ENCODE measurements at regions of chr20 and their contacts with region 1.

Region 1: DNA sequence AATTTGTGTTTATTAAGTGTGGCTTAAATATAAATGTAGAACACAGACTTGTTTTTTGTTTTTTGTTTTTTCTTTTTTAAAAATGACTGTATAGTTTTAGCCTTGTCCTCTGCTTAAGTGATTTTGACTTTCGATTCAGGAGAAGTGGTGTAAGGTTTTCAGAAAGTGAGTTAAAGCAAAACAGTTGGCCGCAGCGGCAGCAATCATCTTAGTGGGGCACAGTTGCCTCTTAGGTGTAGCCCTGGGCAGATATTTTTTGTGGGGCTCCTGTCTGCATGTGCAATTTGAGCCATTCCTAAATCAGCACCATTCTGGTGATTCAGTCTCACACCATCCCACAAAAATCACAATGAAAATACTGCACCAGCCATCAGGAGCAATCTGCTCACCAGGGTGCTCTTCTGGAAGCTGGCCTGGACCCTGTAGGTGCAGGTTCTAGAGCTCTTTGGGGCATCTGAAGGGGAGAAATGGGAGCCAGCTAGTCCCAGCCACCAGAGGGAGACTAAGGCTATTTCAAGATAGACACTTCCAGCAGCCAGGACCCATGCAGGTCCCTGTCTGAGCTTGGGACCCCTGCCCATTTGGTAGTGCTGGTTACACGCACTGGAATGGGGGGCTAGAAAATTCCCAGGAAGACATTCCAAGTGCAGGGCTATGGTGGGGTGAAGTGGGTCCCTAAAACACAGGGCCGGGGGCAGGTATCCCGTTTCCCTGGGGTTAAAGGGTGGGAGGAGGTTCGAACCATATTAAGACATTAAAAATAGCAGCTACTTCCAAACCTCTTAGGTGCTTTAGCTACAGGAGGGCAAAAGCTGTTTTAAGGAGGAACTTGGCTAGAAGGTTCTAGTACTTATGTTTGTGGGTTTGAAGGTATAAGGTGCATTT is 156.6 kb downstream of the NFATC2 start:
- DNase-seq: peak; percentile 54
- ATAC-seq: peak; percentile 54
- H3K4me3 Mint-ChIP-seq: no peak overlapping the region
- H3K27ac Mint-ChIP-seq: peak overlapping the region; percentile 58
- H3K4me1 Mint-ChIP-seq: peaks cover 69% of the 10 kb centered on the region
- H3K27me3 Mint-ChIP-seq: no peaks in the 10 kb centered on the region

Region 2: DNA sequence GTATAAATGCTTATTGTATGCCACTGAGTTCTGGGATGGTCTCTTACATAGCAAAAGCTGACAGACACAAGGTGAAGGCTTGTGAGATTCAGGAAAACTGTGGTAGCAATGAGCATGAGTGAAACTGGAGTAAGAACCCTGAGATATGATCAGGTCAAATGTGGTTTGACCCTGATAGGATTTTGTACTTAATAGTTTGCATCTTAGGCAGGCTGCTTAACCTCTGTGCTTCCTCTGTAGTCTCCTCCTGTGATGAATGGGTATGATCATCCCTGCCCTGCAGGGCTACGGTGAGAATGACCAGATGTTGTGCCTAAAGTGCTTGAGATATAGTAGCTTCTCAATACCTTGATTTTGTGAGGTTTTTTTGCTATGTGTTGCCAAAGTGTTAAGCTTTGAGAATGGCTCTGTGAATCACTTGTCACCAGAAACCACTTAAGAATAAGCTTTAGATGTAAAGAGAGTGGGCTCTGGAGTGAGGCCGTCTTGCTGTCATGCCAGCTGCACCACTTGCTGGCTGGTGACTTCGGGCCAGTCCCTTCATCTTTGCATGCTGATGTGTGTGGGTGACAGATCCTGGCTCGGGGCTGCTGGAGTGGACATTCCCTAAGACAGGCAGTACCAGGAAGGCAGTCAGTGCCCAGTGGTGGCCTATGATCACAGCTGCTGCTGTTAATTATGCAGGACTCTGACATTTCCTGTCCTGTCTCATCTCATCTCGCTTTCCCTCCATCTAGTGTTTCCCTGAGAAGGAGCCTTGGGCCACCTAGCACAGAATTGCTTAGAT is 98.1 kb before region 1 on chr20:
- CTCF ChIA-PET with region 1: no interaction called
- POLR2A ChIA-PET with region 1: no interaction called
- DNase-seq: no peak
- ATAC-seq: no peak
- H3K4me3 Mint-ChIP-seq: no peak overlapping the region
- H3K27ac Mint-ChIP-seq: no peak overlapping the region
- H3K4me1 Mint-ChIP-seq: no peaks in the 10 kb centered on the region
- H3K27me3 Mint-ChIP-seq: no peaks in the 10 kb centered on the region

Region 3: DNA sequence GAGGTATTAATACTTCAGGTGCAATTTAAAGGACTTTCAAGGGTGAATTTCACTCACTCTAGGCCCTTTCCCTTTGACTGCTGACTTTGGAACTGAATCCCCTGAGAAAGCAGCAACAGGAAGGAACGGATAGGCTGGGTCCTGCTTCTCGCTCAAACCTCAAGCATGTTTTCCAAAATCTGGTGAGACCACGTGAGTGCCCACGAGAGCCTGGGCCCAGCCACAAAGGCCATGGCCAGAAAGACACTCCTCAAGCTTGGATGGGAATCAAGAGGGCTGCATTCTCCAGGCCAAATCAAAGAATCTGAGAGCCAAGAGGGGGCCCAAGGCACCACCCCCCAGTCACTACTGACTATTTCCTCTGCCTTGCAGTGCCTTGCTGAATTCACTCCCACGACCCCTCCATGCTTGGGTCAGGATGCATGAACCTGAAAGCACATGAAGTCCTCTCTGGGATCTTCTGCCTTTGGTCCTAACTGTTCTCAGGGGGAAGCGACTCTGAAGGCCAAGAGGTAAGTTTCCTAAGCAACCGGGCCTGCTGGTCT is 10.5 kb after region 1 on chr20:
- CTCF ChIA-PET with region 1: interaction called, 36 read pairs
- POLR2A ChIA-PET with region 1: interaction called, 9 read pairs
- DNase-seq: no peak
- ATAC-seq: no peak
- H3K4me3 Mint-ChIP-seq: no peak overlapping the region
- H3K27ac Mint-ChIP-seq: peak overlapping the region; percentile 7
- H3K4me1 Mint-ChIP-seq: peaks cover 58% of the 10 kb centered on the region
- H3K27me3 Mint-ChIP-seq: no peaks in the 10 kb centered on the region

Region 4: GRCh38 chr20:51412333-51412871 is 26.5 kb after region 1 on chr20:
- CTCF ChIA-PET with region 1: interaction called, 20 read pairs
- POLR2A ChIA-PET with region 1: no interaction called
- DNase-seq: no peak
- ATAC-seq: no peak
- H3K4me3 Mint-ChIP-seq: no peak overlapping the region
- H3K27ac Mint-ChIP-seq: peak overlapping the region; percentile 69
- H3K4me1 Mint-ChIP-seq: peaks cover 81% of the 10 kb centered on the region
- H3K27me3 Mint-ChIP-seq: no peaks in the 10 kb centered on the region

Region 5: GRCh38 chr20:51423290-51423667 is 37.4 kb after region 1 on chr20:
- CTCF ChIA-PET with region 1: interaction called, 11 read pairs
- POLR2A ChIA-PET with region 1: no interaction called
- DNase-seq: no peak
- ATAC-seq: no peak
- H3K4me3 Mint-ChIP-seq: no peak overlapping the region
- H3K27ac Mint-ChIP-seq: peak overlapping the region; percentile 60
- H3K4me1 Mint-ChIP-seq: peaks cover 71% of the 10 kb centered on the region
- H3K27me3 Mint-ChIP-seq: no peaks in the 10 kb centered on the region

Region 6: GRCh38 chr20:51512645-51513044 is 126.8 kb after region 1 on chr20:
- CTCF ChIA-PET with region 1: interaction called, 10 read pairs
- POLR2A ChIA-PET with region 1: no interaction called
- DNase-seq: peak; percentile 44
- ATAC-seq: peak; percentile 87
- H3K4me3 Mint-ChIP-seq: peak overlapping the region; percentile 50
- H3K27ac Mint-ChIP-seq: peak overlapping the region; percentile 85
- H3K4me1 Mint-ChIP-seq: peaks cover 77% of the 10 kb centered on the region
- H3K27me3 Mint-ChIP-seq: no peaks in the 10 kb centered on the region